ENCODE measurements at regions of chr10 and their contacts with region 1.

Region 1: DNA sequence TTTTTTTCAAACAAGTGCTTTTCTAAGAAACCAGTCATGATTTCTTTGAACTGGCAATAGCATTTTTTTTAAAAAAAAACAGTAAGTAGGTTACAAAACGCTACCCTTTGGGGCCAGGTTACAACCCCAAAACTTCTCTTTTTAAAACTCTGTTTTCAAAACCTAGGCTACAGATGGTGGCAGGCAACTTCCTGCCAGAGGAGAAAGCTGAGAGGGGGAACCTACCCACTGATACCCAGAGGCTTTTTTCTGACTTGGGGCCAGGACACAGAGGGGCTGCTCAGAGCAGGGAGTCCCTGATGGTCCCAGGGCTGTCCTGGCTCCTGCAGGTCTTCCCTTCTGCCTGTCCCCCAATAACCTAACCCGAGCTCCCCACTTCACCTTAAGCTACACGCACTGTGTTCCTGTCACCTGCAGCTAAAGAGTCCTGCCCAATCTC is 6.9 kb downstream of the STN1 start:
- DNase-seq: peak; percentile 70
- ATAC-seq: peak; percentile 76
- H3K4me3 Mint-ChIP-seq: peak overlapping the region; percentile 86
- H3K27ac Mint-ChIP-seq: peak overlapping the region; percentile 95
- H3K4me1 Mint-ChIP-seq: peaks cover 71% of the 10 kb centered on the region
- H3K27me3 Mint-ChIP-seq: no peaks in the 10 kb centered on the region

Region 2: GRCh38 chr10:103881416-103882284 is 29.4 kb before region 1 on chr10:
- POLR2A ChIA-PET with region 1: no interaction called
- DNase-seq: no peak
- ATAC-seq: no peak
- H3K4me3 Mint-ChIP-seq: no peak overlapping the region
- H3K27ac Mint-ChIP-seq: no peak overlapping the region
- H3K4me1 Mint-ChIP-seq: peaks cover 4% of the 10 kb centered on the region
- H3K27me3 Mint-ChIP-seq: no peaks in the 10 kb centered on the region

Region 3: GRCh38 chr10:103895411-103896186 is 15.4 kb before region 1 on chr10:
- POLR2A ChIA-PET with region 1: interaction called, 21 read pairs
- DNase-seq: no peak
- ATAC-seq: peak; percentile 40
- H3K4me3 Mint-ChIP-seq: peak overlapping the region; percentile 38
- H3K27ac Mint-ChIP-seq: peak overlapping the region; percentile 67
- H3K4me1 Mint-ChIP-seq: peaks cover 29% of the 10 kb centered on the region
- H3K27me3 Mint-ChIP-seq: no peaks in the 10 kb centered on the region

Region 4: DNA sequence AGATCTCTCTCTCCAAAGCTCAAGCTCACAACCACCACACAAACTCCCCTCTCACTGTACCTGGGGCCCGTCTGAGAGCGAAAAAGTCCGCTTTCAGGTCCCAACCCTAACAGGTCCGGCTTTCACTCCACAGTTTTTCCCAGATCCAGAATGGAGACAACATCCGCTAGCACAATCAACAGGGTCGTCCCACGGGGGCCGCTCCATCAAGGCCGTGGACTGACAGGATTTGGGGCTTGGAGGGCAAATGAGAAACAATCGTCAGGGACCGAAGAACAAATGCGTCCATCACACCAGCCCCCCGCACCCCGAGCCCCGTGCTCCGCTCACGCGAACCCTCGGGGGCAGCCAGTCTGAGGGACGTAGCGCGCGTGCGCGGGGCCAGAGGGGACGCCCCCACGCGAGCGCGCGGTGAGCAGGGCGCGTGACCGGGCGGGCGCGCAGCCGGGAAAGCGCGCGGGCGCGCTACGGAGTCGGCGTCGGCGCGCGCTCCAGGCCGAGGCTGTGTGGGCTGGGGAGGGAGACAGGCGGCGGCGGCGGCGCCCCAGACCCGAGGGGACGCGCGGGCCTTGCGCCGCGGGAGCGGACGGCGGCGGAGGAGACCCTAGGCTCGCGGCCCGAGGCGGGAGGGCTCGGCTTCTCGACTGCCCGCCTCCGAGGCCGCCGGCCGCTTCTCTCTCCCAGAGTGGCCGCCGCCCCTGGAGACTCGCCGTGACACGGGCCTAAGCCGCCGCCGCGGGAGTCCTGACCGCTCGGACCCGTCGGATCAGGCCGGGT is 55.8 kb after region 1 on chr10 and contains the start of gene SLK:
- POLR2A ChIA-PET with region 1: interaction called, 17 read pairs
- DNase-seq: peak; percentile 96
- ATAC-seq: peak; percentile 87
- H3K4me3 Mint-ChIP-seq: peak within 1 kb of the TSS; percentile 99
- H3K27ac Mint-ChIP-seq: peak within 1 kb of the TSS; percentile 96
- H3K4me1 Mint-ChIP-seq: peaks cover 27% of the 10 kb centered on the region
- H3K27me3 Mint-ChIP-seq: no peaks in the 10 kb centered on the region
- total RNA-seq, gene SLK: 37.9 to 38.4 TPM

Measured in activated naive CD8-positive, alpha-beta T cell treated with anti-CD3 and anti-CD28 coated beads, Interleukin-2, amount 10 ng/mL, durations not matched to agents 7 days and 5 days (primary cell).